ENCODE measurements at regions of chr5 and their contacts with region 1.

Region 1: GRCh38 chr5:178204182-178204894 is at the start of gene HNRNPAB:
- DNase-seq: peak; percentile 93 to 98 (median 95)
- ATAC-seq: peak; percentile 92
- H3K4me3 ChIP-seq: peak within 1 kb of the TSS; percentile 94
- H3K4me3 Mint-ChIP-seq: peak within 1 kb of the TSS; percentile 90 to 100 (median 99)
- H3K27ac ChIP-seq: peak within 1 kb of the TSS; percentile 88
- H3K27ac Mint-ChIP-seq: peak within 1 kb of the TSS; percentile 91 to 100 (median 99)
- H3K4me1 ChIP-seq: peaks cover 11 to 25% of the 10 kb centered on the region in 2 donors
- H3K4me1 Mint-ChIP-seq: peaks cover 26 to 35% (median 33%) of the 10 kb centered on the region in 7 donors
- H3K27me3 ChIP-seq: no peaks in the 10 kb centered on the region
- H3K27me3 Mint-ChIP-seq: peaks cover 0 to 2% (median 0%) of the 10 kb centered on the region in 5 donors
- total RNA-seq, gene HNRNPAB: 68.9 to 197 (median 82.6) TPM

Region 2: GRCh38 chr5:176361437-176362232 is 1842.7 kb before region 1 on chr5 and contains the start of gene KIAA1191:
- CTCF ChIA-PET with region 1: no interaction called
- POLR2A ChIA-PET with region 1: no interaction called
- intact Hi-C with region 1: loop called in 1 of 2 experiments (anchors 10 kb)
- DNase-seq: peak; percentile 80 to 96 (median 93)
- ATAC-seq: peak; percentile 96
- H3K4me3 ChIP-seq: peak within 1 kb of the TSS; percentile 82
- H3K4me3 Mint-ChIP-seq: peak within 1 kb of the TSS; percentile 93 to 99 (median 98)
- H3K27ac ChIP-seq: peak within 1 kb of the TSS; percentile 80
- H3K27ac Mint-ChIP-seq: peak within 1 kb of the TSS; percentile 91 to 99 (median 94)
- H3K4me1 ChIP-seq: peaks cover 19 to 24% of the 10 kb centered on the region in 2 donors
- H3K4me1 Mint-ChIP-seq: peaks cover 21 to 49% (median 38%) of the 10 kb centered on the region in 7 donors
- H3K27me3 ChIP-seq: no peaks in the 10 kb centered on the region
- H3K27me3 Mint-ChIP-seq: no peaks in the 10 kb centered on the region
- total RNA-seq, gene KIAA1191: 59.4 to 76.6 (median 65.9) TPM

Region 3: DNA sequence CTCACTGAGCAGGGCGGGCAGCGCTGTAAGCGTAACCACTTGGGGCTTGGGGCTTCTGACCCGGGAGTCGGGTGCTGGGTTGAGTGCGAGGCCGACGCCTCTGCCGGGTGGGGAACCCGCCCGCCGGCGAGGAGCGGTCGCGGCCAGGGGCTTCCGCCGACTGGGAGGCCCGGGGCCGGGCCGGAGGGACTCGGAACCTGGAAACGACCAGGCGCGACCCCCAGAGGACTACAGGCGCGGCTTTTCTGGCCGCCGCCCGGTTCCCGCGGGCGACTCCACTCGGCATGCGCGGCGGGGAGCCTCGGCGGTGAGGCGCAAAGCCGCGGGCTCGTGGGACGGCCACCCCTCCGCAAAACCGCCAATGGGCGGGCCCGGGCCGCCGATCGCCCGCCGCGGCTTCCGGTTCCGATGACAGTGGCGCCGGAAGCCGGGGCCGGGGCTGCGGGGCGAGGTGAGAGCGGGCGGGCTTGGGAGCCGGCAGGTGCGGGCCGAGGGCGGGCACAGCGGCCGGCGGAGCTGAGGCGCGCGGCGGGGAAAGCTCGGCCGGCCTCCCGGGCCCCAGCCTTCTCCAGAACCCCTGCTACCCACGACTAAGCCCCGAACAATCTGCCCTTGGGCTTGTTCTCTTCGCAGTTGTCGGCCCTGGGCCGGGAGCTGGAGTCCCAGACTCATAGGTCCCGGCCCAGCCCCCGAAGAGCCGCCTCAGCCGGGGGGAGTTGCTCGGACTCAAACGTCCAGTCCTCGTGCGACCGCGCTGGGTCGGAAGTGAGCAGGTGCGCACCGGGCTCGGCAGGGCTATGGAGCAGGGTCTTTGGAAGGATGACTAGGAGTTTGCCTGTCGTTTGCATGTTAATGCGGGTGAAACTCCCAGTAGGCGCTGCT is 73.5 kb before region 1 on chr5 and contains the start of gene RMND5B:
- CTCF ChIA-PET with region 1: no interaction called
- POLR2A ChIA-PET with region 1: no interaction called
- intact Hi-C with region 1: loop called (anchors 5 kb)
- DNase-seq: peak; percentile 72 to 91 (median 79)
- ATAC-seq: peak; percentile 94
- H3K4me3 ChIP-seq: peak within 1 kb of the TSS; percentile 71
- H3K4me3 Mint-ChIP-seq: peak within 1 kb of the TSS; percentile 75 to 95 (median 86)
- H3K27ac ChIP-seq: peak within 1 kb of the TSS; percentile 84
- H3K27ac Mint-ChIP-seq: peak within 1 kb of the TSS; percentile 51 to 97 (median 93)
- H3K4me1 ChIP-seq: peaks cover 5 to 8% of the 10 kb centered on the region in 2 donors
- H3K4me1 Mint-ChIP-seq: peaks cover 16 to 39% (median 27%) of the 10 kb centered on the region in 7 donors
- H3K27me3 ChIP-seq: no peaks in the 10 kb centered on the region
- H3K27me3 Mint-ChIP-seq: peaks cover 0 to 4% (median 0%) of the 10 kb centered on the region in 5 donors
- total RNA-seq, gene RMND5B: 21.0 to 42.7 (median 23.3) TPM

Region 4: GRCh38 chr5:179559284-179560252 is 1355.2 kb after region 1 on chr5:
- CTCF ChIA-PET with region 1: no interaction called
- POLR2A ChIA-PET with region 1: no interaction called
- intact Hi-C with region 1: loop called (anchors 10 kb)
- DNase-seq: peak; percentile 77 to 97 (median 86)
- ATAC-seq: peak; percentile 100
- H3K4me3 ChIP-seq: peak overlapping the region; percentile 75
- H3K4me3 Mint-ChIP-seq: peak overlapping the region; percentile 85 to 95 (median 91)
- H3K27ac ChIP-seq: peak overlapping the region; percentile 70
- H3K27ac Mint-ChIP-seq: peak overlapping the region; percentile 81 to 96 (median 93)
- H3K4me1 ChIP-seq: peaks cover 3 to 4% of the 10 kb centered on the region in 2 donors
- H3K4me1 Mint-ChIP-seq: peaks cover 11 to 46% (median 32%) of the 10 kb centered on the region in 7 donors
- H3K27me3 ChIP-seq: no peaks in the 10 kb centered on the region
- H3K27me3 Mint-ChIP-seq: no peaks in the 10 kb centered on the region

Region 5: GRCh38 chr5:180071531-180072255 is 1867.4 kb after region 1 on chr5 and contains the start of gene RNF130:
- CTCF ChIA-PET with region 1: no interaction called
- POLR2A ChIA-PET with region 1: no interaction called
- intact Hi-C with region 1: loop called in 1 of 2 experiments (anchors 5 kb)
- DNase-seq: peak; percentile 64 to 91 (median 77)
- ATAC-seq: peak; percentile 88
- H3K4me3 ChIP-seq: peak within 1 kb of the TSS; percentile 62
- H3K4me3 Mint-ChIP-seq: peak within 1 kb of the TSS; percentile 80 to 93 (median 91)
- H3K27ac ChIP-seq: peak within 1 kb of the TSS; percentile 76
- H3K27ac Mint-ChIP-seq: peak within 1 kb of the TSS in 8 of 9 donors; percentile 78 to 95 (median 90)
- H3K4me1 ChIP-seq: peaks cover 6 to 21% of the 10 kb centered on the region in 2 donors
- H3K4me1 Mint-ChIP-seq: peaks cover 10 to 47% (median 38%) of the 10 kb centered on the region in 7 donors
- H3K27me3 ChIP-seq: no peaks in the 10 kb centered on the region
- H3K27me3 Mint-ChIP-seq: peaks cover 0 to 50% (median 0%) of the 10 kb centered on the region in 5 donors
- total RNA-seq, gene RNF130: 3.6 to 76.3 (median 23.3) TPM

Measured in naive thymus-derived CD4-positive, alpha-beta T cell (primary cell).